Activated T-helper 1 cell treated with anti-CD3 and anti-CD28 coated beads, Interleukin-12 subunit alpha, Interleukin-12 subunit beta, Interleukin-2, Interleukin-4 antibody, amounts not matched to agents 30 ng/mL and 10 ng/mL and 1 ng/mL, durations not matched to agents 14 hours and 24 hours and 36 hours (primary cell): ENCODE measurements at regions of chr7 and their contacts with region 1.

Region 1: GRCh38 chr7:110943701-110944345 is 147.1 kb upstream of the LRRN3 start:
- DNase-seq: no peak
- H3K4me3 Mint-ChIP-seq: no peak overlapping the region
- H3K27ac Mint-ChIP-seq: no peak overlapping the region
- H3K4me1 Mint-ChIP-seq: peaks cover 17% of the 10 kb centered on the region
- H3K27me3 Mint-ChIP-seq: no peaks in the 10 kb centered on the region

Region 2: DNA sequence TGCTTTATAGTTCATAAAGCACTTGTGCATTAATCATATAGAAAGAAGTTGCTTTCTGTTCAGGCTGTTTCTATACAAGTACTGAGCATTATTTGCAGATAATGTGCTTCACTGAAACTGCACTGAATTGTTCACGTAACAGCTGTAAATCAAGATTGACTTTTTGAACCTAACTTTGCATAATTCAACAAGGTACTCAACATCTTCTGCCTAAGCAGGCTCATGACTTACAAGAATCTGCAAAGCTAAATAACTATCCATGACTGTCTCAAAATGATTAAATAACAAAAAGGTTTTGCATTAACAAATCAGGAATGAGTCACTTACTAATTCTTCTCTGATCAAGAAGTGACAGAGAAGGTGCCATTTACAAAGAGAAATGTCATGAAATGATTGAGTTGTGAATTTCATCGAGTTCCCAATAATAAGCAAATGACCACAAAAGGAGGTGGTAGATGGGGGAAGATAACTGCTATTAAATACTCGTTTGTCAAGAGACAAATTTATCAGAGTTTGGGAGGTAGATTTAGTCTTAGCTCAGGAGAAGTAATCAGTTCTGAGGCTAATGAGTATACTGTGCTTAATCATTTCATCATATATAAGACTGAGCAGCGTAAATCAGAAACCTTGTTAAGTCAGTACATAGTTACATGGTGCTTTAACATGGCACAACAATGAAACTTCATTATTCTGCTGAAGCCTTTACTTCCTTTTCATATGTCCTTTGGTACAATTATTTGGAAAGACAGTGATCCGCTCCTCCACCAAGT is 14.2 kb before region 1 on chr7:
- intact Hi-C with region 1: loop called (anchors 2 kb)
- DNase-seq: no peak
- H3K4me3 Mint-ChIP-seq: no peak overlapping the region
- H3K27ac Mint-ChIP-seq: no peak overlapping the region
- H3K4me1 Mint-ChIP-seq: peaks cover 7% of the 10 kb centered on the region
- H3K27me3 Mint-ChIP-seq: no peaks in the 10 kb centered on the region